Kidney (tissue), 22 donors: ENCODE measurements at regions of chr4 and their contacts with region 1.

Region 1: GRCh38 chr4:81466841-81467671 is 4.7 kb downstream of the RASGEF1B start:
- DNase-seq: peak in 4 of 5 donors; percentile 58 to 90 (median 77)
- H3K4me3 ChIP-seq: no peak overlapping the region
- H3K27ac ChIP-seq: no peak overlapping the region
- H3K4me1 ChIP-seq: peaks cover 0 to 7% (median 5%) of the 10 kb centered on the region in 3 donors
- H3K27me3 ChIP-seq: no peaks in the 10 kb centered on the region
- CTCF ChIP-seq: peak; percentile 90

Region 2: DNA sequence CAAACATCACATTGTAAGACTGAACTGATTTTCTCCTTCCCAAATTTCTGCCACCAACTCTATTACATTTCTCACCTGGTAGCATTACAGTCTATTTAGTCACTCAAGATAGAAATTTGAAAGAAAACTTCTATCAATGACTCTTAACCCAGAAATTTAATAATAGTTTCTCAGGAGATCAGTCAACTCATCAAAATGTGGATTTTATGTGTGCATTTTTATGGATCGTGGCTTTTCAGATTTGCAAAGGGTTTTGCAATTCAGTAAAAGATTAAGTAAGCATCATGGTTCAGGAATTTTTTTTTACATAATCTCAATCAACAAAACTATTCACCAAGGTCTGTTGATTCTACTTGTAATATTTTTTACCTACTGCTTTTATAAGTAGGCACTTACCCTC is 1020.4 kb before region 1 on chr4:
- intact Hi-C with region 1: no loop called
- DNase-seq: no peak
- H3K4me3 ChIP-seq: no peak overlapping the region
- H3K27ac ChIP-seq: no peak overlapping the region
- H3K4me1 ChIP-seq: no peaks in the 10 kb centered on the region
- H3K27me3 ChIP-seq: no peaks in the 10 kb centered on the region
- CTCF ChIP-seq: no peak

Region 3: GRCh38 chr4:80897537-80898303 is 569.3 kb before region 1 on chr4:
- intact Hi-C with region 1: no loop called
- DNase-seq: no peak
- H3K4me3 ChIP-seq: no peak overlapping the region
- H3K27ac ChIP-seq: no peak overlapping the region
- H3K4me1 ChIP-seq: no peaks in the 10 kb centered on the region
- H3K27me3 ChIP-seq: no peaks in the 10 kb centered on the region
- CTCF ChIP-seq: no peak

Region 4: DNA sequence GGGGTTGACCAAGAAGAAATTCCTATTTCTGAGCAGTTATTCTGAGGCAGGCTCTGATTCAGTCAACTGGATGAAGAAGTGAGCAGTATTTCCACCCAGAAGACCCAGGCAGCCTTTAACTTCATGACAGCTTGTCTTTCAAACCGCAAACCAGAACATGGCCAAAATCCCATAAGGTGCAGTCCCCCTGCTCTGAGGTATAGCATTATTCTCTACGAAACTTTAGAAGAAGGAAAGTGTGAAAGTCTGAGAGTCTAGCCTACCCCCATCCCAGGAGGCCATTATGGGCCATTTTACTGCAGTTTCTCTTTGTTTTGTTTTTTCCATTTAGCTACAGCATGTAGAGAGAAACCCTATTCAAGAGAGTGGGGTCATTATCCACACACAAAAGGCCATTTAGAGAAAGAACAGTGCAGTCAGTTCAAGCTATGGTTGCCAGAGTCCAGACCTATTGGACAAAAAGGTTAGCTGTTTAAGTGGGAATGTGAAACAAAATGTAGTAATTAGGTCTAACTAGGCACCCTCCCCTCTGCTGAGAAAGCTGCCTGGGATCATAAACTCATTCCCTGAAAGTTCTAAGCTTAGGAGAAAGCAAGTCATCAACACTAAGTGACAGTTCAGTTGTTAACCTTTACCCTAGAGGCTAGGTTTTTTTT is 56.7 kb after region 1 on chr4:
- intact Hi-C with region 1: no loop called
- DNase-seq: no peak
- H3K4me3 ChIP-seq: no peak overlapping the region
- H3K27ac ChIP-seq: no peak overlapping the region
- H3K4me1 ChIP-seq: no peaks in the 10 kb centered on the region
- H3K27me3 ChIP-seq: no peaks in the 10 kb centered on the region
- CTCF ChIP-seq: no peak

Region 5: DNA sequence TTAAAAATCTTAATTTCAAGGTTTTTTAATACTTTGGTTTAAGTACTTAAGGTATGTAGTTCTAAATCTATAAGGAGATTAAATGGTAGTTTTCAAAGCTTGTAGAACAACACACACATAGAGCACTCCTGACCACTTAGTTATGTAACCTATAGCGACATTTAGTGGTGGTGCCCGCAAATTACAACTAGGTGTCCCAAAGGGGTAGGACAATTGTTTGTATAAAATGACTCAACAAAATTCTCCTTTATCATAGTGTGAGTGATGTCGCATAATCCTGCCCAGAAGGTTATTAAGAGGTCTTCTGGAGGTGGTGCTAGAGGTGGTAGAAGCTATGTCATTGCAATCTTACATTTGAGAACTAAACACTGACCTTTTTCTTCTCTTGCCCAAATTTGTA is 377.7 kb after region 1 on chr4:
- intact Hi-C with region 1: loop called (anchors 5 kb)
- DNase-seq: peak in 4 of 5 donors; percentile 67 to 91 (median 80)
- H3K4me3 ChIP-seq: no peak overlapping the region
- H3K27ac ChIP-seq: no peak overlapping the region
- H3K4me1 ChIP-seq: no peaks in the 10 kb centered on the region
- H3K27me3 ChIP-seq: no peaks in the 10 kb centered on the region
- CTCF ChIP-seq: peak; percentile 69